Activated CD4-positive, alpha-beta T cell treated with anti-CD3 and anti-CD28 coated beads, Interleukin-2, amount 10 ng/mL, durations not matched to agents 24 days and 14 days (primary cell): ENCODE measurements at regions of chr19 and their contacts with region 1.

Region 1: GRCh38 chr19:16143399-16144245 is at the start of gene HSH2D:
- DNase-seq: peak; percentile 95
- H3K4me3 Mint-ChIP-seq: peak within 1 kb of the TSS; percentile 96
- H3K27ac Mint-ChIP-seq: peak within 1 kb of the TSS; percentile 98
- H3K4me1 Mint-ChIP-seq: peaks cover 45% of the 10 kb centered on the region
- H3K27me3 Mint-ChIP-seq: no peaks in the 10 kb centered on the region
- total RNA-seq, gene HSH2D: 22.7 and 23.1 TPM in 2 replicates

Region 2: GRCh38 chr19:16118489-16119033 is 25.1 kb before region 1 on chr19:
- intact Hi-C with region 1: loop called (anchors 2 kb)
- DNase-seq: peak; percentile 82
- H3K4me3 Mint-ChIP-seq: peak overlapping the region; percentile 73
- H3K27ac Mint-ChIP-seq: peak overlapping the region; percentile 94
- H3K4me1 Mint-ChIP-seq: peaks cover 46% of the 10 kb centered on the region
- H3K27me3 Mint-ChIP-seq: no peaks in the 10 kb centered on the region